BJ (cell line): ENCODE measurements at regions of chr7 and their contacts with region 1.

Region 1: DNA sequence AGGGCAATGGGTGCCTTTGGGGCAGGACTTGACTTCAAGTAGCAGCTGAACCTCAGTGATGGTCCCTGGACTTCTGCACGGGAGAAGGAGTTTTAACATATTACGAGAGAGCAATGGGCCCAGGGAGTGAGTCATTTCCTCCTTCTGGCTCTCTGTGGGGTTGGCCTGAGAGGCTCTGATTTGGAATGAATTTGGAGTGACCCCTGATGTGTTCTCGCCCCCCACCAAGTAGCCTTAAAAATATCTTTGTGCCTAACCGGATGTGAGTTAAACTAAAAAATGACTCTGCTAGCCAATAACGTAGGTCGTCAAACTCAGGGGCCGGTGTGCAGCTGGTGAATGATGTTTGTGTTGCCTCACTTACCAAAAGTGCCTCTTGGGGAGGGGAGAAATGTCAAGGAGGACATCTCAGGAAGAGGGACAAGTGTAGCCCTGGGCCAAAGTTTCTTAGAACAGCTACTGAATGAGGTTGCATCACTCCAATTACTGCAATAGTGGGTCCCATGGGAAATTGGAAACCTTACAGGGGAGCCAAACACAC is 656.6 kb downstream of the INHBA start:
- DNase-seq: peak; percentile 24
- H3K4me3 ChIP-seq: no peak overlapping the region
- H3K27me3 ChIP-seq: no peaks in the 10 kb centered on the region
- CTCF ChIP-seq: no peak

Region 2: GRCh38 chr7:40175725-40176510 is 870.4 kb before region 1 on chr7:
- CTCF ChIA-PET with region 1: no interaction called
- POLR2A ChIA-PET with region 1: interaction called, 13 read pairs
- DNase-seq: peak; percentile 18
- H3K4me3 ChIP-seq: no peak overlapping the region
- H3K27me3 ChIP-seq: no peaks in the 10 kb centered on the region
- CTCF ChIP-seq: no peak